Esophagus squamous epithelium (tissue), 5 donors: ENCODE measurements at regions of chr3 and their contacts with region 1.

Region 1: DNA sequence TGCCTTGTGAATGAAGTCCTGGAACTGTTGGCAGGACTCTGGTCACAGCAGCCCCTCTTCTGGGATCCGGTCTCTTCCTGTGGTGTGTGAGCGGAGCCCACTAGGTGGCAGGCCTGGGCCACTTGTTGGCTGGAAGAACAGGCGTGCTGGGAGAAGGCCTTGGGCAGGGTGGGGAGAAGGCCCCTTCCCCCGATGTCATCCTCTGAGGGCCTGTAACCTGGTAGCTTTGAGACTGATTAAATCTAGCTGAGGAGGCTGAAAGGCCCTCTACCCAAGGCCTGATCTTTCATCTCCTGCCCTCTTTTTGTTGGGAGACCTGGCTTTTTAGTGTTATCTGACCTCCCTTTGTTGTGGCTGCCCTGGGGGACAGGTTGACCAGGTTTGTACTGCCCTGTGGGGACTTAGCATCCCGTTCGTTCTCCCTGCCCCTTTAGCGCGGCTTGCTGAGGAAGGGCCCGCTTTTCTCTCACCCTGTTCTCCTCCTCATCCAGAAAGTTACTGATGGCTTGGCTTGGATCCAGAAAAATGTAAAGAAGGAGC is 48.3 kb downstream of the CHCHD6 start:
- DNase-seq: no peak
- H3K4me3 ChIP-seq: no peak overlapping the region
- H3K27ac ChIP-seq: peak overlapping the region; percentile 34 to 70 (median 39)
- H3K4me1 ChIP-seq: peaks cover 3 to 27% (median 12%) of the 10 kb centered on the region in 3 donors
- H3K27me3 ChIP-seq: no peaks in the 10 kb centered on the region
- CTCF ChIP-seq: peak; percentile 74 to 92 (median 81)
- POLR2A ChIP-seq: no peak

Region 2: GRCh38 chr3:126982471-126983175 is 230.2 kb after region 1 on chr3 and contains the start of gene PLXNA1:
- intact Hi-C with region 1: loop called (anchors 5 kb)
- DNase-seq: peak; percentile 58
- H3K4me3 ChIP-seq: peak within 1 kb of the TSS; percentile 60 to 95 (median 68)
- H3K27ac ChIP-seq: peak within 1 kb of the TSS; percentile 83 to 93 (median 86)
- H3K4me1 ChIP-seq: peaks cover 23 to 55% (median 23%) of the 10 kb centered on the region in 3 donors
- H3K27me3 ChIP-seq: peaks cover 0 to 13% (median 0%) of the 10 kb centered on the region in 4 donors
- CTCF ChIP-seq: peak; percentile 86 to 97 (median 94)
- POLR2A ChIP-seq: peak in 1 of 4 donors; percentile 38
- total RNA-seq, gene PLXNA1: 19.7 to 27.5 (median 23.9) TPM

Region 3: GRCh38 chr3:127455541-127456450 is 703.4 kb after region 1 on chr3:
- intact Hi-C with region 1: loop called (anchors 5 kb)
- DNase-seq: no peak
- H3K4me3 ChIP-seq: peak overlapping the region in 3 of 4 donors; percentile 16 to 56 (median 30)
- H3K27ac ChIP-seq: no peak overlapping the region
- H3K4me1 ChIP-seq: peaks cover 19 to 36% (median 20%) of the 10 kb centered on the region in 3 donors
- H3K27me3 ChIP-seq: peaks cover 0 to 85% (median 7%) of the 10 kb centered on the region in 4 donors
- CTCF ChIP-seq: peak; percentile 77 to 93 (median 88)
- POLR2A ChIP-seq: no peak

Region 4: DNA sequence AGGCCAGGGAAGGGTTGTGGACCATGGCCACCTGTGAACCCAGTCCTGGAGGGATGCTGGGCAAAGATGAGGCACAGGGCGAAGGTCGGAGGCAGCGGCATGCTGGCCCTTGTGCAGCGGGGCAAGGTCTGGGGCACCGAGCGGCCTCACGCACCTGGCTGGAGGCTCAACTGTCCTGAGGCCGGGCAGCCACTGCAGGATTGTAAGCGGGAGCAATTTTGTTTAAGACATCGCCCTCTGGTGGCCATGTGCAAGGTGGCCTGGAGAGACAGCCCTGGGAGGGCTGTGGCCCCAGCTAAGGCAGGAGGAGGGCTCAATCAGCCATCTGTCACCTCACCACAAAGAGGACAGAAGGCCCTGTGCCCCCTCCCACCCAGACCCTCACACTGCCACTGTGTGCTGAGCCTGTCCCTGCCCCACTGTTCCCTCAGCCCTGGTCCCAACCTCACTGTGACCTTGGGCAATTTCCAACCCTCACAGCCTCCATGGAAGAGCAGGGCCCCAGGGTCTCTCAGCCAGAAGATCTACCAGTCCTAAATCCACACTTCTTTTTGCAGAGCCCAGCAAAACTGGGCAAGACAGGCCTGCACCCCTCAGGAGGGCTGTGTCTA is 791.9 kb after region 1 on chr3:
- intact Hi-C with region 1: loop called (anchors 10 kb)
- DNase-seq: no peak
- H3K4me3 ChIP-seq: no peak overlapping the region
- H3K27ac ChIP-seq: peak overlapping the region in 1 of 4 donors; percentile 49
- H3K4me1 ChIP-seq: peaks cover 9 to 21% (median 12%) of the 10 kb centered on the region in 3 donors
- H3K27me3 ChIP-seq: no peaks in the 10 kb centered on the region
- CTCF ChIP-seq: peak; percentile 74 to 85 (median 78)
- POLR2A ChIP-seq: no peak